MCF 10A (cell line): ENCODE measurements at regions of chr7 and their contacts with region 1.

Region 1: GRCh38 chr7:6476596-6477299 is 29.0 kb upstream of the DAGLB start:
- DNase-seq: no peak
- H3K4me3 Mint-ChIP-seq: no peak overlapping the region
- H3K27ac Mint-ChIP-seq: no peak overlapping the region
- H3K4me1 Mint-ChIP-seq: peaks cover 24% of the 10 kb centered on the region
- H3K27me3 Mint-ChIP-seq: no peaks in the 10 kb centered on the region
- CTCF ChIP-seq: no peak

Region 2: DNA sequence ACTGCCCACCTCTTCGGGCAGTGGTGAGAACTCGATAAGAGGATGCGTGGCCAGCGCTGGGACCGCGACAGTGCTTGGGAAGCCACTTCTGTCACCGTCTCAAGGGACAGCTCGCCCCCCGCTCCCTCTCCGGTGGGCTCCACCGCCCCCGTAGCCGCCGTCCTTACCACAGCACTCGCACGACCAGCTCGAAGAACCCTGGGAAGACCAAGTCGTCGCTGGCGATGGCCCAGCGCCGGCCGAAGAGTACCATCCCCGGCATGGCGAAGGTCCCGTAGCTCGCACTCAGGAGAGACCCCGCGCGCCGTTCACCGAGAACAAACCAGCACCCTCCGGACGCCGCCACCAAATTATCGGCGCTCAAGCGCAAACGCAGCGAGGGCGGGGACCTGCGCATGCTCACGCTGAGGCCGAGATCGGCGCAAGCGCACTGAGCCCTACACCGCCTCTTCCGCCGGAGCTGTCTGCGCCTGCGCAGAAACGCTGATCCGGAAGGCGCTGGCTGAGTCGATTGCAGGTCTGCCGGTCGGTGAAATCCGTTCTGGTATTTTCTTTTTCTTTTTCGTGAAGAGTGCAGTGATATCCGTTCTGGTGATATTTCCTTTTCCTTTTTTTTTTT is 29.1 kb before region 1 on chr7 and contains the start of gene DAGLB:
- CTCF ChIA-PET with region 1: interaction called, 3 read pairs
- POLR2A ChIA-PET with region 1: interaction called, 13 read pairs
- intact Hi-C with region 1: no loop called
- DNase-seq: peak; percentile 92
- H3K4me3 Mint-ChIP-seq: peak within 1 kb of the TSS; percentile 76
- H3K27ac Mint-ChIP-seq: peak within 1 kb of the TSS; percentile 98
- H3K4me1 Mint-ChIP-seq: peaks cover 30% of the 10 kb centered on the region
- H3K27me3 Mint-ChIP-seq: no peaks in the 10 kb centered on the region
- CTCF ChIP-seq: no peak
- total RNA-seq, gene DAGLB: 28.9 and 29.5 TPM in 2 replicates

Region 3: DNA sequence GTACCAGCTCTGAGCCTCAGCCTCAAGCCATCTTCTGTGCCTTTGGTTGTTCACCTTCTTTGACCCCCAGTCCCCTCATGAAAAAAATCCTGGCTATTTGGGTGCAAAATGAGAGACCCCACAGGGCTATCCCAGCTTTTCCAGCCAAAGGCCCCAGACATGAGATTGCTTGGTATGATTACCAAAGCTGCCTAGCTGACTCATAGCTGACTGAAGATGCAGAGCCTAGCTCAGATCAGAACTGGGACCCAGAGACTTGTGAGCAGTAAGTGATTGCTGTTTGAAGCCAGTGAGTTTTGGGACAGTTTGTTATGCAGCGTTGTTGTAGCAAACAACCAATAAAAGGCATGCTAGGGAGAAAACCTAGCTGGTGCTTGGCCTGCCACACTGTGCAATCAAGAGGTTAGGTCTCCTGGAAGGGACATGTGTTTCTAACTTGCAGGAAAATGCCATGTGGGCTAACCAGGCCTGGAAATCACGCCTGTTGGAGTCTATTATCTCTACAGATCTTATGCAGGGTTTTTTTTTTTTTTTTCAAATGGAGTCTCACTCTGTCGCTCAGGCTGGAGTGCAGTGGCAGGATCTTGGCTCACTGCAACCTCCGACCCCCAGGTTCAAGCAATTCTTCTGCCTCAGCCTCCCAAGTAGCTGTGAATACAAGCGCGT is 19.0 kb after region 1 on chr7:
- CTCF ChIA-PET with region 1: no interaction called
- POLR2A ChIA-PET with region 1: no interaction called
- intact Hi-C with region 1: no loop called
- DNase-seq: no peak
- H3K4me3 Mint-ChIP-seq: no peak overlapping the region
- H3K27ac Mint-ChIP-seq: no peak overlapping the region
- H3K4me1 Mint-ChIP-seq: no peaks in the 10 kb centered on the region
- H3K27me3 Mint-ChIP-seq: no peaks in the 10 kb centered on the region
- CTCF ChIP-seq: no peak